Cardiac septum (tissue), 1 donor: ENCODE measurements at regions of chr3 and their contacts with region 1.

Region 1: DNA sequence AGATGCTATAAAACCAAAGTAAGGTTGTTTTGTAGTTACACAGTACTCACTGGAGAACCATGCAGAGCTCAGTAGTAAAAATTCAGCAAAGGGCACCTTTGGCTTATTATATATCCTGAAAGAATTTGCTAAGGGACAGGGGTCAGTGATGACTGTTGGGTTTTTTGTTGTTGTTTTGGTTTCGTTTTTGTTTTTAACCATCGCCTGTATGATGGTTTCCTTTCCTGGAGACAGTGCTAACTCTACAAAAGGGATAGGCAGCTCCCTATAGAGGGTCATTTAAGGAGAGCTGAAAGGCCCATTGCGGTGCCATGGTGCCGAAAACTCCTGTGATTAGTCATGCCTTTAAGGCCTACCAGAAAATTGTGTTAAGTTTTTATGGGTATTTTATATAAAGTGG is 118.2 kb upstream of the GOLIM4 start:
- DNase-seq: no peak

Region 2: DNA sequence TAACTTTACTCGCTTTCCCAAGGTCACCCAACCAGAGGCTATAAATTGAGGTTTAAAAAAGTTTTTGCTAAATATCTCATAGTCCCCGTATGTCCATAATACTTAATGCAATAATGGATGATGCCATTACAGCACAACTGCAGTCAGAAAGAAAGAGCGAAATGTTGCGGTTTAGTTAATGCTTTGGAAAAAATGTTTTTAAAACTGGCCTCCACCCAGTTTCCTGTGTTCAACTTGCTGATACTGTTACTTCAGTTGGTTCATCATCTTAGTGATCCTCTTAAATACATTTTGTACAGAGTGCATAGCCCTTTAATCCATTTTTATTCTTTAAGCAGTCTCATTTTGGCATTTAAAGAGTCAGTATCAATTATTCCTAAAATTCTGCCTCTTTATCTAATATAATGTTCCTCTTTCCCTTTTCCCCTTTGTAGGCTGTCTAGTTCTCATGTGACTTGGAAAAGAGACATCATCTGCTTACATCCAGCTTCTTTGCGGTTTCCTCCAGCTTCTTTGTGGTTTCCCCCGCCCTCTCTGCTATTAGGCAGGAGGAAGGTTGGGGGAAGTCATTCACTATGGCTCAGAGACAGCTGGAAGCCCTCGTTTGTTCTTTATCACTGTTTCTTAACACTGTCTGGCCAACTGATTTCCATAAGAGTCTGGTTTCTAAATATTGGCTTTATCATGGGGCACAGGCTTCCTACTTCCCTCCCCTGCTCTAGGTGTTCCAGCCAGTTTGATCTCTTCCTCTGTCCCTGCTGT is 272.5 kb before region 1 on chr3:
- intact Hi-C with region 1: no loop called
- DNase-seq: peak; percentile 75

Region 3: DNA sequence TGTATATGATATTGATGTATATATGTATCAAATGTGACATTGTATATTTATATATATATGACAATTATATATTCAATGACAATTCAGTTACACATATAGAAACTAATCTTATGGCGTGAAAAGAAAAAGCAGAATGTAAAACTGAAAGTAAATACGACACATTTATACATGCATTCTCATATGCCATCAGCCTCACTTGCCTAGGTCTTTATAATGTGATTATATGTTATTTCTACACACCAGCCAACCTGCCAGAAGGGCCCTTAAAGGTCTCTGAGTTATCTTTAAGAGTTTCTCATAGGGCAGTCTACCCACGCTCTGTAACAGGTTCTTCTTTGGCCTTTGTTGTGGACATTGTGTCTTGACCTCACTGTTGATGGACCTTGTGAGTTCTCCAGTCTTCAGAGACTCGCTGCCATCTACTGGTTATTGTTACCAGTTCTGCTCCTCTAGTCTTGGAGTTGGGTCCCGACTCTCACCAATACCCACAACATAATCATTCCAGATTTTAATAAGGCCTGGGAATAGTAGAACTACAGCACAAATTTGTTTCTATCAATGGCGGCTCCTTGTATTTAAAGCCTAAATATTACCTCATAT is 253.3 kb after region 1 on chr3:
- intact Hi-C with region 1: loop called (anchors 5 kb)
- DNase-seq: no peak

Region 4: DNA sequence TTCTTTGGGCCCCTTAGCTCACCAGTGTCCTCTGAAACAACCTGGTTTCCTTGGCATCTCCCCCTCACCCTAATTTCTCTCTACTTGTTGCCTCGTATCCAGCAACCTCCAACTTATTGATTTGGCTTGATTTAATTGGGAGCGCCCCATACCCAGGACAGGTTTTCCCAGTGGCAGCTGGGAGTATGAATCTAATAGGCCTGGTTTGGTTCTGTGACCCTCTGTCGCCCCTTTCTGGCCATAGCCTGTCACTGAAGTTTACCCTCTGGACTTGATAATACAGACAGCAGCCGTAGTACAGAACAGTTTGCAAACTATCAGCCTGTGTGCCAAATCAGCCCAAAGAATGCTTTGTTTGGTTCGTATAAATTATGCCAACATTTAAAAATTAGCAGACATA is 406.9 kb after region 1 on chr3:
- intact Hi-C with region 1: loop called (anchors 10 kb)
- DNase-seq: peak; percentile 70

Region 5: DNA sequence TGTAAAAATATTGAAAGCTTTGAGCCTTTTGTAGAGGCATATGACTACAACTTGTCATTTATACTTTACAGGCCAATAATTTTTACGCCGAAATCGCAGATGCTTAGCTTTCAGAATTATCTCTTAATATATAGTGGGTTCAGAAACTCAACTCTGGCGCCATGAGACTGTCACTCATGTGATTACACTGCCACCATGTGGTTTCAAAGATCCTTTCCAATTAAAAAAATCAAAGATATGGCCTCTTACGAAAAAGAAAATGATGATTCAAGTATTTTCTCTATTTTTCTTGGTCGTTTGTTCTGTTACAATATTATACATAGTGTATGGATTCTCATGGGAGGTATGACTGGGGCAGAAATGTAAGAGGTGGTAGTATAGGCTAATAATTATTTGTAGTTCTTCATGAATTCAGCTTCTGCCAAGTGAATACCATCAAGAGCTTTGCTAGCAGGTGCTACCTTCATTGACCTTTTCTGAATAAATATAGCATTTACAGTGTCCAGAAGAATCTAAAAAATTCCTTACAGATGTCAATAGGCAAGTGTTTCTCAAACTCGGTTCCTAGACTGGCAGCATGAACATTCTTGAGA is 633.5 kb after region 1 on chr3:
- intact Hi-C with region 1: loop called (anchors 2 kb)
- DNase-seq: no peak